ENCODE measurements at regions of chr15 and their contacts with region 1.

Region 1: GRCh38 chr15:88620995-88621772 is at the start of gene AEN:
- DNase-seq: peak; percentile 90 to 97 (median 94)
- ATAC-seq: peak; percentile 85 to 87
- H3K4me3 Mint-ChIP-seq: peak within 1 kb of the TSS; percentile 85 to 97 (median 92)
- H3K27ac Mint-ChIP-seq: peak within 1 kb of the TSS; percentile 87 to 100 (median 96)
- H3K4me1 Mint-ChIP-seq: peaks cover 29 to 49% (median 45%) of the 10 kb centered on the region in 4 donors
- H3K27me3 Mint-ChIP-seq: peaks cover 0 to 9% (median 6%) of the 10 kb centered on the region in 5 donors
- polyA plus RNA-seq, gene AEN: 18.0 to 32.9 (median 25.7) TPM

Region 2: DNA sequence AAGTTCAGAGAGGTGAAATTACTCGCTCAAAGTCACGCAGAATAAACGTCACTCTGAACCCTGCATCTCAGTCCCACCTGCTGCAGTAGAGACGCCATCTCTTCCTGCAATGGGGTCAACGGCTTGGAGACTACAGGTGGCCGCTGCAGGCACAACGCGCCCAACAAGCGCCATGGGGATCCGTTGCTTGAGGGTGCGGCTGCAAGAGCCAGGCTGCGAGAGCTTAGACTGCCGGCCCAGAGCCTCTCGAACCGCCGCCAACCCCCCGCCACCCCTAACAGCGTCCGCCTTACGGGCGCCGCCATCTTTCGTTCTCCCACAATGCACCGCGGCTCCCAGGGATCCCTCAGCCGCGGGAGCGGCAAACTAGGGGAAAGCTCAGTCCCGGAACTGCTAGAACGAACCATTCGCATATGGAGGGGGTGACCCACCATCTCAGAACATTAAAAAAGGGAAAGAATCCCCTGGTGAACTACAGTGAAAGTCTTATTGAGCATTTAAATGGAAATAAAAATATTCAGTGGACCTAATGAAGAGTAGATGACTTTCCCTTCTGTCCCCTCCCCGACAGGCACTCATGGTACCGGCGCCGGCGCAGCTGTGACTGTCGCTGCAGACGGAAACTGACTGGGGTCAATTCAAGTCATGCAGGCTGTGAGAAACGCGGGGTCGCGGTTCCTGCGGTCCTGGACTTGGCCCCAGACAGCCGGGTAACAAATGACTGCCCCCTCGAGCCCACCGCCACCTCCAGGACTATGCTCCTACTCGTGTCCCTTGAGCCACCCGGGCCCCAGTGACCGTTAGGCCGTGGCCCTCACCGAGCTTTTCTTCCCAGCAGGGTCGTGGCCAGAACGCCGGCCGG is 153.9 kb before region 1 on chr15 and contains the starts of genes MRPL46 and MRPS11:
- POLR2A ChIA-PET with region 1: interaction called, 12 read pairs
- DNase-seq: peak; percentile 77 to 95 (median 88)
- ATAC-seq: peak; percentile 93 to 94
- H3K4me3 Mint-ChIP-seq: peak within 1 kb of the TSS; percentile 93 to 99 (median 96)
- H3K27ac Mint-ChIP-seq: peak within 1 kb of the TSS; percentile 92 to 100 (median 99)
- H3K4me1 Mint-ChIP-seq: peaks cover 16 to 35% (median 26%) of the 10 kb centered on the region in 4 donors
- H3K27me3 Mint-ChIP-seq: no peaks in the 10 kb centered on the region
- polyA plus RNA-seq, gene MRPL46: 41.6 to 61.6 (median 57.2) TPM
- polyA plus RNA-seq, gene MRPS11: 59.0 to 71.8 (median 67.1) TPM

Region 3: GRCh38 chr15:88518903-88519302 is 102.3 kb before region 1 on chr15:
- POLR2A ChIA-PET with region 1: no interaction called
- DNase-seq: no peak
- ATAC-seq: no peak
- H3K4me3 Mint-ChIP-seq: no peak overlapping the region
- H3K27ac Mint-ChIP-seq: no peak overlapping the region
- H3K4me1 Mint-ChIP-seq: peaks cover 0 to 2% (median 0%) of the 10 kb centered on the region in 4 donors
- H3K27me3 Mint-ChIP-seq: no peaks in the 10 kb centered on the region

Region 4: GRCh38 chr15:88563638-88564037 is 57.5 kb before region 1 on chr15:
- POLR2A ChIA-PET with region 1: no interaction called
- DNase-seq: no peak
- ATAC-seq: no peak
- H3K4me3 Mint-ChIP-seq: no peak overlapping the region
- H3K27ac Mint-ChIP-seq: peak overlapping the region in 2 of 10 donors; percentile 6 to 75
- H3K4me1 Mint-ChIP-seq: no peaks in the 10 kb centered on the region
- H3K27me3 Mint-ChIP-seq: peaks cover 0 to 18% (median 2%) of the 10 kb centered on the region in 5 donors

Region 5: GRCh38 chr15:88638626-88639372 is 17.6 kb after region 1 on chr15 and contains the start of gene ISG20:
- POLR2A ChIA-PET with region 1: interaction called, 13 read pairs
- DNase-seq: peak; percentile 90 to 99 (median 98)
- ATAC-seq: peak; percentile 81 to 82
- H3K4me3 Mint-ChIP-seq: peak within 1 kb of the TSS; percentile 84 to 99 (median 94)
- H3K27ac Mint-ChIP-seq: peak within 1 kb of the TSS; percentile 93 to 100 (median 100)
- H3K4me1 Mint-ChIP-seq: peaks cover 42 to 87% (median 75%) of the 10 kb centered on the region in 4 donors
- H3K27me3 Mint-ChIP-seq: no peaks in the 10 kb centered on the region
- polyA plus RNA-seq, gene ISG20: 422 to 562 (median 537) TPM

Region 6: GRCh38 chr15:88649286-88649733 is 28.1 kb after region 1 on chr15:
- POLR2A ChIA-PET with region 1: interaction called, 34 read pairs
- DNase-seq: peak; percentile 40 to 85 (median 66)
- ATAC-seq: peak; percentile 91 to 94
- H3K4me3 Mint-ChIP-seq: peak overlapping the region; percentile 59 to 97 (median 82)
- H3K27ac Mint-ChIP-seq: peak overlapping the region; percentile 92 to 100 (median 98)
- H3K4me1 Mint-ChIP-seq: peaks cover 51 to 96% (median 94%) of the 10 kb centered on the region in 4 donors
- H3K27me3 Mint-ChIP-seq: no peaks in the 10 kb centered on the region

Region 7: DNA sequence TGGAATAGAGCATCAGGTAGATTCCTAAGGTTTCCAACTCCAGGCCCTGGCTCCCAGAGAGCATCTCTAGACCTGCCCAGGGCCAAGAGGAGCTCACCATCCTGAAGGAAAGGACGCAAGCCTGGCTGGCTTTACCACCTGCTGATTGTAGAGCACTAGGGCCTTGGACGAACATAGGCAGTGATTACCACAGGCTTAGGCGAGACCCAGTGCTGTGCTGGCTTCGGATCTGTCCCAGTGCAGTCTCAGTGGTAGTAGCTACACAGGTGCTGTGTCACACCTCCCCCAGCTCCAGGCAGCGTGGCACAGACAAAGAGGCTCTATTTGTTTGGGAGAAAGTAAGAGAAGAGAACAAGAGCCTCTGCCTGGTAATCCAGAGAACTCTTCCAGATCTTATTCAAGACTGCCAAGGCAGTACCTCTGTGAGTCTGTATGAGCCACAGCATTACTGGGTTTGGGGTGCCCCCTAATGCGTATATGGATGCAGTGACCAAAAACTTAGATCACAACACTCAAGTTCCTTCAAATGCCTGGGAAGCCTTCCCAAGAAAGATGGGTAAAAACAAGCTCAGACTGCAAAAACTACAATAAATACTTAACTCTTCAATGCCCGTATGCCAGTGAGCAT is 43.1 kb after region 1 on chr15:
- POLR2A ChIA-PET with region 1: interaction called, 16 read pairs
- DNase-seq: peak in 9 of 10 donors; percentile 35 to 83 (median 62)
- ATAC-seq: peak; percentile 93 to 94
- H3K4me3 Mint-ChIP-seq: peak overlapping the region in 1 of 10 donors; percentile 14
- H3K27ac Mint-ChIP-seq: peak overlapping the region in 9 of 10 donors; percentile 7 to 87 (median 78)
- H3K4me1 Mint-ChIP-seq: peaks cover 27 to 42% (median 37%) of the 10 kb centered on the region in 4 donors
- H3K27me3 Mint-ChIP-seq: peaks cover 0 to 8% (median 3%) of the 10 kb centered on the region in 5 donors

Measured in naive thymus-derived CD8-positive, alpha-beta T cell (primary cell).